Activated CD8-positive, alpha-beta memory T cell treated with anti-CD3 and anti-CD28 coated beads, Interleukin-2, amount 10 ng/mL, durations not matched to agents 7 days and 5 days (primary cell): ENCODE measurements at regions of chr20 and their contacts with region 1.

Region 1: DNA sequence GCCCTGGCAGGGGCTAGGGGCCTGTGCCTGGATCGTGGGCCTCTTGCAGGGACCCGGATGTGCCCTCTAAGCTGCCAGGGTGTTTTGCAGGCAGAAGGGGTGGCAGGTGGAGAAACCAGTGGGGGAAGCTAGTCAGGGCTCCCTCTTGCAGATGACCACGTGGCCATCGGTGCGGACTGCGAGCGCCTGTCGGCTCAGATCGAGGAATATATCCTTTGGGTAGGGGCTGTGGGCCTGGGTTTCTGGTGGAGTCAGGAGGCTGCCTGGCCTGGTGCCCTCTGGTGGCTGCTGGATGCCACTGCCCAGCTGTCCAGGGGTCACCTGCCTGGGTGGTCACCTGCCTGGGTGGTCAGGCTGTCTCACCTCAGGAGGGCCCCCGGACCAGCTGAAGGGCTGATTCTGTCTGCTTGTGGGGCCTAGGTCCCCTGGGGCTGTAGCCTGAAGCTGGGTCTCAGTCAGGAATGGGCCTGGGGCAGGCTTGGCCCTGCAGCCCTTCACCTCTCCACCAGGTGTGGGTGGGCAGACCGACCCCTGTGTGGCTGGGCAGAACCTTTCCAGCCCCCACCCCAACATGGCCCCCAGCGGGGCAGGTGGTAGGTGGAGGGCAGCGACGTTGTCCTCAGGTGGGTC is 6.7 kb downstream of the TCEA2 start:
- DNase-seq: no peak
- ATAC-seq: no peak
- H3K4me3 Mint-ChIP-seq: no peak overlapping the region
- H3K27ac Mint-ChIP-seq: no peak overlapping the region
- H3K4me1 Mint-ChIP-seq: peaks cover 56% of the 10 kb centered on the region
- H3K27me3 Mint-ChIP-seq: no peaks in the 10 kb centered on the region

Region 2: GRCh38 chr20:64000906-64001305 is 68.8 kb before region 1 on chr20:
- CTCF ChIA-PET with region 1: no interaction called
- DNase-seq: no peak
- ATAC-seq: no peak
- H3K4me3 Mint-ChIP-seq: no peak overlapping the region
- H3K27ac Mint-ChIP-seq: no peak overlapping the region
- H3K4me1 Mint-ChIP-seq: no peaks in the 10 kb centered on the region
- H3K27me3 Mint-ChIP-seq: no peaks in the 10 kb centered on the region

Region 3: DNA sequence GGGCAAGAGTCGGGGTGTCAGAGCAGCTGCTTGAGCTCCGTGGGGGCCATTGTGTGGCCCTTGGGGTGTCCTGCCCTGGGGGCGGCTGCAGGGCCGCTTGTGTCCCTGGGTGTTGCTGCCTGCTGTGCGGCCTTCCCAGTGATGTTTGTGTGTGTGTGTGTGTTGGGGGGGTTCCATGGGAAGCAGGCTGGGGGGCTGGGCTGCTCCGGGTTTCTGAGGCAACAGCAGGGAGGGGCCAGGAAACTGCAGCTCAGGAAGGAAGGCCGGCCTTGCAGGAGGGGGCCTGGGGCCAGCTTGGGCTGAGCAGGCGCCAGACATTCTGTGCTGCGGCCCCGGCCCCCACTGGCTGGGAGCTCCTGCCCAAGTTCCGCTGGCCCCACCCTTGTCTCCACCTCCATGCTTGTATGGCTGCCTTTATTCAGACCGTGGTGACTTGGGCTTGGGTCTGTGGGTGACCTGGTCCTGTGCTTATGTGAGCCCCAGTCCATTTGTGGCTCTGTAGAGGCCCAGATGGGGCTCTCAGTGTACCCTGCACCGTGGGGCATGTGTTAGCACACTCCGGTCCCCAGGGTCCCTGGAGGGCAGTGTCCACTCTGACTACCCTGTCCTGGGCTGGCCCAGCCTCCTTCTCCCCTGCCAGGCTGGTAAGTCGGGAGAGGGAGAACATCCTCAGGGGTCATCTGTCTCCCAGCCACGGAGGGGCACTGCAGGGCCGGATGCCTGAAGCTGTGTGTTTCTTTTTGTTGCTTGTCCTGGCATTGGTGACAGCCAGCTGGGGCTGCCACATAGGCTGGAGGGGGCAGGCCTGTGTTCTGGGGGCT is 15.7 kb before region 1 on chr20:
- CTCF ChIA-PET with region 1: interaction called, 12 read pairs
- DNase-seq: no peak
- ATAC-seq: no peak
- H3K4me3 Mint-ChIP-seq: no peak overlapping the region
- H3K27ac Mint-ChIP-seq: no peak overlapping the region
- H3K4me1 Mint-ChIP-seq: peaks cover 30% of the 10 kb centered on the region
- H3K27me3 Mint-ChIP-seq: peaks cover 19% of the 10 kb centered on the region

Region 4: GRCh38 chr20:64145458-64145857 is 75.7 kb after region 1 on chr20:
- CTCF ChIA-PET with region 1: no interaction called
- DNase-seq: no peak
- ATAC-seq: no peak
- H3K4me3 Mint-ChIP-seq: no peak overlapping the region
- H3K27ac Mint-ChIP-seq: no peak overlapping the region
- H3K4me1 Mint-ChIP-seq: no peaks in the 10 kb centered on the region
- H3K27me3 Mint-ChIP-seq: no peaks in the 10 kb centered on the region